Body of pancreas (tissue), 4 donors: ENCODE measurements at regions of chr15 and their contacts with region 1.

Region 1: GRCh38 chr15:85554852-85555521 is 174.6 kb downstream of the AKAP13 start:
- DNase-seq: no peak
- ATAC-seq: no peak
- H3K4me3 ChIP-seq: no peak overlapping the region
- H3K27ac ChIP-seq: peak overlapping the region in 1 of 4 donors; percentile 40
- H3K4me1 ChIP-seq: peaks cover 10% of the 10 kb centered on the region
- H3K27me3 ChIP-seq: no peaks in the 10 kb centered on the region
- CTCF ChIP-seq: no peak
- POLR2A ChIP-seq: no peak

Region 2: DNA sequence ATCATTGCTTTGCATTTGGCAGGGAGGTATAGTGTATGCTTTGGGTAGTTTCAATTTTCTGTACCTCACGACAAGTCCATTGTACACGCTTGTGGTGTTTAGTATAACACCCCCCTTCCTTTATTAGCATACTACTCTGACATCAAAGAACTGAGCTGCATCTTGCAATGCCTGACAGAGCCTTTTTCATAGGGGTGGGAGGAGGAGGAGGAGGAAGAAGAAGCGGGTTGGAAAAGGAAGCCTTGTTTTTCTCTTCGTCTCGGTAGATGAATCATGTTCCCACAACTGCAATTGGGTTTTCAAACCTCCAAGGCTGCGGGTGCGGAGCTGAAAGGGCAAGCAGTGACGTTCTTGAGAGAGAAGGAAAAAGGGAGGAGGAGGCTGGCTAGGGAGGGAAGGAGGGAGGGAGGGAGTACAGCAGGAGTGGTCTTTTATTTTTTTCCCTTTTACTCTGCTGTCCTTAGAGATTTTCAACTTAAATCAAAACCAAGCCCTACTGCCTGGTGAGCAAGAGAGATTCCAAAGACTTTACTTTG is 64.0 kb after region 1 on chr15:
- intact Hi-C with region 1: loop called (anchors 10 kb)
- DNase-seq: peak in 3 of 4 donors; percentile 42 to 63 (median 44)
- ATAC-seq: peak; percentile 56
- H3K4me3 ChIP-seq: no peak overlapping the region
- H3K27ac ChIP-seq: peak overlapping the region in 3 of 4 donors; percentile 44 to 63 (median 45)
- H3K4me1 ChIP-seq: peaks cover 94% of the 10 kb centered on the region
- H3K27me3 ChIP-seq: no peaks in the 10 kb centered on the region
- CTCF ChIP-seq: no peak
- POLR2A ChIP-seq: peak in 2 of 3 donors; percentile 29 to 35

Region 3: DNA sequence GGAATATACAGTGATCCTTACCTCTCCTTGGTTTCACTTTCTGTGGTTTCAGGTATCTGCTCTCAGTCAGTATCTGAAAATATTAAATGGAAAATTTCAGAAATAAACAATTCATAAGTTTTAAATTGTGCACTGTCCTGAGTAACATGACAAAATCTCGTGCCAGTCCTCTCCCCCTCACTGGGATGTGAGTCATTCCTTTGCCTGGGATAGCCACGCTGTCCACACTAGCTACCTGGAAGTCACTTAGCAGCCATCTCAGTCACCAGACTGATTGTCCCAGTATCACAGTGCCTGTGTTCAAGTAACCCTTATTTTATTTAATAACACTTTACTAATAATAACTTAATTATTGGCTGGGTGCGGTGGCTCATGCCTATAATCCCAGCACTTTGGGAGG is 255.1 kb after region 1 on chr15:
- intact Hi-C with region 1: no loop called
- DNase-seq: no peak
- ATAC-seq: no peak
- H3K4me3 ChIP-seq: no peak overlapping the region
- H3K27ac ChIP-seq: no peak overlapping the region
- H3K4me1 ChIP-seq: no peaks in the 10 kb centered on the region
- H3K27me3 ChIP-seq: no peaks in the 10 kb centered on the region
- CTCF ChIP-seq: no peak
- POLR2A ChIP-seq: no peak